Heart right ventricle (tissue), 16 donors: ENCODE measurements at regions of chr16 and their contacts with region 1.

Region 1: GRCh38 chr16:81314603-81315270 is at the start of gene GAN:
- DNase-seq: peak; percentile 94 to 95
- ATAC-seq: peak; percentile 97 to 99 (median 98)
- H3K4me3 ChIP-seq: peak within 1 kb of the TSS; percentile 43 to 97 (median 75)
- H3K27ac ChIP-seq: peak within 1 kb of the TSS; percentile 79 to 94 (median 92)
- H3K4me1 ChIP-seq: peaks cover 3 to 50% (median 27%) of the 10 kb centered on the region in 9 donors
- H3K27me3 ChIP-seq: no peaks in the 10 kb centered on the region
- CTCF ChIP-seq: no peak
- total RNA-seq, gene GAN: 9.7 to 17.7 (median 12.8) TPM

Region 2: GRCh38 chr16:81214745-81215166 is 100.0 kb before region 1 on chr16:
- intact Hi-C with region 1: loop called in 4 of 10 experiments (anchors 5 to 10 kb)
- DNase-seq: no peak
- ATAC-seq: peak in 1 of 8 donors; percentile 34
- H3K4me3 ChIP-seq: no peak overlapping the region
- H3K27ac ChIP-seq: no peak overlapping the region
- H3K4me1 ChIP-seq: no peaks in the 10 kb centered on the region
- H3K27me3 ChIP-seq: peaks cover 0 to 25% (median 4%) of the 10 kb centered on the region in 7 donors
- CTCF ChIP-seq: peak in 6 of 9 donors; percentile 10 to 31 (median 18)

Region 3: DNA sequence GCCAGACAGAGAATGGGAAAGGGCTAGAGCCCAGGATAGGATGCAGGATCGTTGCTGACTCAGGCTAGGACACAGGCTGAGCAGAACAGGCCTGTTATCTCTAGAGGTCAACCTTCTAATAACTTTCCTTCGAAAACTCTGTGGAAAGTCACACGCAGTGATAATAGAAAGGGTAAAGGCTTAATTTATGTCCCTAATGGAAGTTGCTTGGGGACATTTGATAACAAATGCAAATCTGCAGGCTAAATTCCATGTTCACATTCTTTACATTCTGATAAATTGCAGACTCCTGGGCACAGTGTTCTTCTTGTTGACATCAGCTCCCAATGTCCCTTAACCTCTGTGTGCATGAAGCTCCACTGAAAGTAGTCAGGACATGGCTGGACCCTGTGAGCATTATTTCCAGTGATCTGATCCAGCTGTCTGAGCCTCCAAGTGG is 91.3 kb before region 1 on chr16:
- intact Hi-C with region 1: loop called in 2 of 10 experiments (anchors 10 kb)
- DNase-seq: no peak
- ATAC-seq: peak in 6 of 8 donors; percentile 86 to 96 (median 94)
- H3K4me3 ChIP-seq: no peak overlapping the region
- H3K27ac ChIP-seq: peak overlapping the region in 4 of 10 donors; percentile 28 to 50 (median 37)
- H3K4me1 ChIP-seq: peaks cover 0 to 12% (median 0%) of the 10 kb centered on the region in 9 donors
- H3K27me3 ChIP-seq: no peaks in the 10 kb centered on the region
- CTCF ChIP-seq: no peak

Region 4: GRCh38 chr16:81265657-81266451 is 48.9 kb before region 1 on chr16:
- intact Hi-C with region 1: loop called in 1 of 10 experiments (anchors 5 kb)
- DNase-seq: peak; percentile 84 to 89
- ATAC-seq: peak; percentile 91 to 98 (median 96)
- H3K4me3 ChIP-seq: no peak overlapping the region
- H3K27ac ChIP-seq: peak overlapping the region in 6 of 10 donors; percentile 27 to 58 (median 48)
- H3K4me1 ChIP-seq: peaks cover 5 to 29% (median 12%) of the 10 kb centered on the region in 9 donors
- H3K27me3 ChIP-seq: no peaks in the 10 kb centered on the region
- CTCF ChIP-seq: no peak

Region 5: DNA sequence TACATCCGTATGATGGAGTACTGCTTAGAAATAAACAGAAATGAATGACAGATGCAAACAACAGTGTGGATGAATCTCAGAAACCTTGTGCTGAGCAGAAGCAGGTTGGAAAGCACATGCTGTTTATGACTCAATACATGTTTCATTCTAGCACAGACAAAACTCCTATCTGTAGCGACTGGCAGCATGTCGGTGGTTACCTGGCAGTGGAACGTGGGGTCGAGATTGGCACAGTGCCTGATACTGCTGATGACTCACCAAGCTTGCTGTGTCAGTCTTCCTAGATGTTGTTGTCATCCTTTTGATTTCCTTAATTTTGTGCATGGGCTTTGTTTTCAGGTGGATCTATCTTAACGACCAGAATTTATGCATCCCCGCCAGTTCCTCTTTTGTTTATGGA is 62.1 kb after region 1 on chr16:
- intact Hi-C with region 1: no loop called
- DNase-seq: no peak
- ATAC-seq: no peak
- H3K4me3 ChIP-seq: no peak overlapping the region
- H3K27ac ChIP-seq: no peak overlapping the region
- H3K4me1 ChIP-seq: peaks cover 0 to 21% (median 0%) of the 10 kb centered on the region in 9 donors
- H3K27me3 ChIP-seq: no peaks in the 10 kb centered on the region
- CTCF ChIP-seq: no peak